ENCODE measurements at regions of chr19 and their contacts with region 1.

Region 1: DNA sequence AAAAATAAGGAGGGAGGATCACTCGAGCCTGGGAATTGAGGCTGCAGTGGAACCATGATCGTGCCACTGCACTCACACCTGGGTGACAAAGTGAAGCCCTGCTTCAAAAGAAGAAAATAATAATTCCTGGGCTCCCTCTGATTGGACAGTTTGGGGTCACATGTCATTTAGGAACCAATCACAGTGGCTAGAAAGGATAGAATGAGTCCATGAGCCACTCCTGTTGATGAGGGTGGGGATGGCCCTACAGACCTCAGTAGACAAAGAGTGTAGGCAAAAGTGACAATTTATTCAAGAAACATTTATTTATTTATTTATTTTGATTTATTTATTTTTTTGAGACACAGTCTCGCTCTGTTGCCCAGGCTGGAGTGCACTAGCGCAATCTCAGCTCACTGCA is 26.8 kb upstream of the ADGRE5 start:
- DNase-seq: no peak
- H3K4me3 ChIP-seq: no peak overlapping the region
- H3K4me3 Mint-ChIP-seq: peak overlapping the region in 1 of 8 donors; percentile 15
- H3K27ac ChIP-seq: peak overlapping the region; percentile 61
- H3K27ac Mint-ChIP-seq: peak overlapping the region in 5 of 7 donors; percentile 35 to 99 (median 93)
- H3K4me1 ChIP-seq: peaks cover 55% of the 10 kb centered on the region
- H3K4me1 Mint-ChIP-seq: peaks cover 22 to 39% (median 29%) of the 10 kb centered on the region in 4 donors
- H3K27me3 ChIP-seq: no peaks in the 10 kb centered on the region
- H3K27me3 Mint-ChIP-seq: no peaks in the 10 kb centered on the region

Region 2: GRCh38 chr19:14375055-14375581 is 20.7 kb after region 1 on chr19:
- CTCF ChIA-PET with region 1: interaction called, 213 read pairs
- POLR2A ChIA-PET with region 1: interaction called, 585 read pairs
- intact Hi-C with region 1: no loop called
- DNase-seq: peak; percentile 88 to 96 (median 93)
- H3K4me3 ChIP-seq: peak overlapping the region in 1 of 2 donors; percentile 20
- H3K4me3 Mint-ChIP-seq: peak overlapping the region; percentile 67 to 87 (median 77)
- H3K27ac ChIP-seq: peak overlapping the region; percentile 100
- H3K27ac Mint-ChIP-seq: peak overlapping the region; percentile 98 to 99 (median 99)
- H3K4me1 ChIP-seq: peaks cover 73% of the 10 kb centered on the region
- H3K4me1 Mint-ChIP-seq: peaks cover 29 to 68% (median 49%) of the 10 kb centered on the region in 4 donors
- H3K27me3 ChIP-seq: no peaks in the 10 kb centered on the region
- H3K27me3 Mint-ChIP-seq: no peaks in the 10 kb centered on the region

Region 3: DNA sequence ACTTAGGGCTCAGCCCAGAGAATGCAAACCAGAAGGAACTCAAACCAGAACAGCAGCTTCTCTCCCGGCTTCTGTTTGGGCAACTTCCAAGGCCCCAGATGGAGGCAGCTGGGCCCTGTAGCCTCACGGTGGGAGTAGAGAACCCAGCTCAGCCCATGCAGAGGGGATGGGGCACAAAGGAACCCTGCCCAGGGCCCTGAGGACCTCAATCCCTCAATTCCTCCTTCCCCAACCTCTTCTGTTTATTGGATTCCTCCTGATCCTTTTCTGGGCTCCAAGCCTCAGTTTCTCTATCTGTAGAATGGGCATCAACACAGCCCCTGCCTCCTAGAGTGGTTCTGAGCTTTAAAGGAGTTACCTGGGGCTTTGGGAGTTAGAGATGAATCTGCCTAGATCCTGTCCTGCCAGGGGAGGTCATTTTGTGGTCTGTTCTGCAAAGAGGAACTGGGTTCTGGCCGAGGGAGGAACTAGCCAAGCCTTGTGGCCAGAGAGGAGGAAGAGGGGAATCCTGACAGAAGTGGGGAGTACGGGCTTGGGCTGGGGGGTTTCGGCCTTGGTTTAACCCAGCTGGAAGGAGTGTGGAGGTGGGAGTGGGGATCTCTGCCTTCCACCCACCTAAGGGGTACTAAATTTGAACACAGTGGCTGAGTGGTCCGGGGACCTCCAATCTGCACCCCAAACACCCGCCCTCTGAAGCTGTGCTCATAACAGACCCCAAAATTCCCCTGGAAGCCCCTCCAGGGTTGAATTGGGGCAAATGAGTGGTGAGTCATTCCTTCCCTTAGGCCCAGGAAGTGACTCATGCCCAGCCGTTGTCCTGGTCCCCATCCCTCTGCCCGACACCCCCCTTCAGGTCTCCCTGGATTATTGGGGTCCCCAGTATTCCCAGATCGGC is 29.5 kb after region 1 on chr19:
- CTCF ChIA-PET with region 1: interaction called, 213 read pairs
- POLR2A ChIA-PET with region 1: interaction called, 585 read pairs
- intact Hi-C with region 1: no loop called
- DNase-seq: peak in 3 of 5 donors; percentile 40 to 91 (median 41)
- H3K4me3 ChIP-seq: peak overlapping the region; percentile 40 to 82
- H3K4me3 Mint-ChIP-seq: peak overlapping the region; percentile 91 to 99 (median 98)
- H3K27ac ChIP-seq: peak overlapping the region; percentile 99
- H3K27ac Mint-ChIP-seq: peak overlapping the region; percentile 96 to 100 (median 98)
- H3K4me1 ChIP-seq: peaks cover 41% of the 10 kb centered on the region
- H3K4me1 Mint-ChIP-seq: peaks cover 19 to 66% (median 37%) of the 10 kb centered on the region in 4 donors
- H3K27me3 ChIP-seq: no peaks in the 10 kb centered on the region
- H3K27me3 Mint-ChIP-seq: peaks cover 0 to 4% of the 10 kb centered on the region in 2 donors